HCT116 (cell line): ENCODE measurements at regions of chr11 and their contacts with region 1.

Region 1: DNA sequence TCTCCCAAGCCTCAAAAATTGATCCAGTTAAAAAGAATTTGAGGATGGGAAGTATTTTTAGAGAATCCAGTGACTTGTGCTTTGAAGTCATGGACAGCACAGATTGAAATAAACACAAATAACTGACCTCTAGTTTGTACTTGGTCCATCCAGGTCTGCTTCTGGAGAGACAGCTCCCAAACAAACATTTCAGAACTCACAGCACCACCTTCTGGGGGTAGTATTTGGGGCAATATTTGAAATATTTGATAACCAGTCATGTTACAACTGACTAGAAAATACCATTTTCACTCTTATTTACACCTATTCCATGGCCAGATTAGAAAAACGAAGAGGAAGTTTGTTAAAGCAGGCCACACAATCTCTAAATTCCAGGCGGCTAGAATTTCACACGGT is 56.2 kb downstream of the CTSC start:
- DNase-seq: no peak
- ATAC-seq: peak; percentile 42; the same call in 1 of the 2 replicates
- H3K4me3 ChIP-seq: no peak overlapping the region
- H3K27ac ChIP-seq: no peak overlapping the region
- H3K4me1 ChIP-seq: no peaks in the 10 kb centered on the region
- H3K27me3 ChIP-seq: no peaks in the 10 kb centered on the region
- CTCF ChIP-seq: peak; percentile 2 to 32 (median 32); a peak in 3 of 6 replicates
- POLR2A ChIP-seq: no peak
- RAD21 ChIP-seq: peak; percentile 62

Region 2: GRCh38 chr11:87281496-87281895 is 999.8 kb before region 1 on chr11:
- CTCF ChIA-PET with region 1: no interaction called
- POLR2A ChIA-PET with region 1: no interaction called
- RAD21 ChIA-PET with region 1: no interaction called
- intact Hi-C with region 1: no loop called
- DNase-seq: no peak
- ATAC-seq: no peak
- H3K4me3 ChIP-seq: no peak overlapping the region
- H3K27ac ChIP-seq: no peak overlapping the region
- H3K4me1 ChIP-seq: no peaks in the 10 kb centered on the region
- H3K27me3 ChIP-seq: no peaks in the 10 kb centered on the region
- CTCF ChIP-seq: peak in 1 of 3 experiments; percentile 31; a peak in 2 of 6 replicates
- POLR2A ChIP-seq: no peak
- RAD21 ChIP-seq: peak; percentile 45

Region 3: DNA sequence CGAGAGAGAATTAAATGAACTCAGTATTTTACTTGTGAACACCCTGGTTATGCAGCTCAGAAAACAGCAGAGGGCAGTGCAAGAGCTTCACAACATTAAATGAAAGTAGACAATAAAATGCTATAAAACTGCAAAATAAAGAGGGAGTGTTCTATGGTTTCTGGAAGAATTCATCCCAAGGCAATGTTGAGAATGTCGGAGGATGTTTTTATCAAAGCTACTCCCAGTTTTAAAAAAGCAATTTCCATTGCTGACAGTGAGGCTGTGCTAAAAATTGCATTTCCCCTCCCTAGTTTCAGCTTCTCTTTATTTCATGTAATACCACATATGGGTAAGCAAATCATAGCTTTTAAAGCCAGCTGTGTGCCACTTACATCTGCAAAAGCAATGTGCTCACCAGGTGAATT is 402.9 kb before region 1 on chr11:
- CTCF ChIA-PET with region 1: no interaction called
- POLR2A ChIA-PET with region 1: no interaction called
- RAD21 ChIA-PET with region 1: no interaction called
- intact Hi-C with region 1: loop called (anchors 10 kb)
- DNase-seq: peak; percentile 21
- ATAC-seq: peak; percentile 66
- H3K4me3 ChIP-seq: no peak overlapping the region
- H3K27ac ChIP-seq: no peak overlapping the region
- H3K4me1 ChIP-seq: no peaks in the 10 kb centered on the region
- H3K27me3 ChIP-seq: no peaks in the 10 kb centered on the region
- CTCF ChIP-seq: peak; percentile 42 to 64 (median 53); a peak in 5 of 6 replicates
- POLR2A ChIP-seq: no peak
- RAD21 ChIP-seq: peak; percentile 66

Region 4: DNA sequence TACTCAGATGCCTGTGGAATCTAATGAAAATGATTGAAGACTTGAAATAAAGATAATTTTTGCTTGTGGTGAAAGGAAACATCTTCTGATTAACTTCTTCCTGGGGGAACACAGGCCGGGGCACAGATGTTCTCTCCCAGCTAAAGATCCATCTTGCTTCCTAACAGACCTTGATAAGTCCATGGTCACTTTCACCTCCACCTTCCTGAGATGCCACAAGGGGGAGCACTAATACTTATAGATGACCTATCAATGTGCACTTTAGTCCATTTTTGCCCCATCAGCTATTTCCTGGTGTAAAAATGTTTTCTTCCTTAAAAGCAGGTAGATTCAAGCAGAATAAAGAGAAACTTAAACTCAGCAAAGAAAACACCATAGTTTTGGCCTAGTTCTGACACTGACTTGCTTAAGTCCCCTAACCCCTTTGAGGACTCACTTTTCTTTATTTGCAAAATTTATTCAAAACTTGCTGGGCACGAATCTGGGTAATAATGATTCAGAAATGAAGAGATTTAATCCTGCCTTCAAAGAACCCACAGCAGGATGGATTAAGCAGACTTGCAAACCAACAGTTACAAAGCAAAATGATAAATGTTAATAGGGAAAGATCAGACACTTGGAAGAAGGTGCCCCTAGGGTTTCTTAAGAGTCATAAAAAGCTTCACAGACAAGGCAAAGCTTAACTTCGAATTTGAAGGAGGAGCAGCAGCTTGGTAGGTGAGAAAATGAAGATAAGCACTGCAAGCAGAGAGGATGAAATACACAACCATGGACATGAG is 264.7 kb before region 1 on chr11:
- CTCF ChIA-PET with region 1: interaction called, 19 read pairs
- POLR2A ChIA-PET with region 1: no interaction called
- RAD21 ChIA-PET with region 1: interaction called in 1 of 2 experiments, 3 read pairs
- intact Hi-C with region 1: loop called (anchors 1 kb)
- DNase-seq: peak; percentile 78
- ATAC-seq: peak; percentile 98
- H3K4me3 ChIP-seq: no peak overlapping the region
- H3K27ac ChIP-seq: no peak overlapping the region
- H3K4me1 ChIP-seq: no peaks in the 10 kb centered on the region
- H3K27me3 ChIP-seq: no peaks in the 10 kb centered on the region
- CTCF ChIP-seq: peak; percentile 72 to 82 (median 82)
- POLR2A ChIP-seq: no peak
- RAD21 ChIP-seq: peak; percentile 92

Region 5: GRCh38 chr11:88035271-88035670 is 246.0 kb before region 1 on chr11:
- CTCF ChIA-PET with region 1: no interaction called
- POLR2A ChIA-PET with region 1: no interaction called
- RAD21 ChIA-PET with region 1: no interaction called
- intact Hi-C with region 1: no loop called
- DNase-seq: no peak
- ATAC-seq: no peak
- H3K4me3 ChIP-seq: no peak overlapping the region
- H3K27ac ChIP-seq: no peak overlapping the region
- H3K4me1 ChIP-seq: no peaks in the 10 kb centered on the region
- H3K27me3 ChIP-seq: no peaks in the 10 kb centered on the region; the same call in 1 of the 2 replicates
- CTCF ChIP-seq: no peak
- POLR2A ChIP-seq: no peak
- RAD21 ChIP-seq: no peak

Region 6: DNA sequence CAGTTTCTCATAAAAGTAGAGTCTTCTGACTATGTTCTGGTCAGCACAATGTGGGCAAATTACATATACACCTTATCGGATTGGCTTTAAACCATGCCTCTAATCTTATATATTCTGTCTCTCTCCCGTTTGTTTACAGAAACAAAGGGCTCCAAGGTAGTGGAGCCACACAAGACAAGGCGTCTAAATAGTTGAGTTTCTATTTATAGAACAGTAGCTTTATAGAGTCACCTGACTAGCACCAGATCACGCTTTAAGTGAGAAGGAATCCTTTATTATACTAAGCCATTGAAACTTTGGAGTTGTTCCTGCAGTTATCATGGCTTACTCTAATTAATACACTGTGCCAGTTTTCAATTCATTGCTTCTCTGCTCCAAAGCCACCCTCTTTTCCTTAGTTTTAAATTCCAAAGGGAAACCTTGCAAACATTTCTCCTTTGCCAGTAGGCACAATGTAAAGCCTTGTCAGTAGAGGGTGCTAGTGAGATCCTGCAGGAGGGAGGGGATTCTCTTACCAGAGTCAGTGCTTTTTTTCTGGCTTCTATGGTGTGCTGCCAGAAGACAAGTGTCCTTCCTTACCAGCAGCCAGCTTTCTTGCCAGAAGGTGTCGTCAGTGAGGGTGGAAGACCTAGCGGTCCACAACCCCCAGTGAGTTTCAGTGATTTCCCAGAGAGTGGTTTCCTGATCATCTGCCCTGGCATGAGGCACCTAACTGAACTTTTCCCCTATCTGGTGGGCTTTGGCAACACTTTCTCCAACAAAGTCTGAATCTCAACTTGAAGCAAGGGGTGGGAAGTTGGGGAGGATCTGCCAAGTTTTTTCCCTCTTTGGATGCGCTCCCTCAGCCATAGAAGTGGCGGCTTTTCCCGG is 177.7 kb before region 1 on chr11:
- CTCF ChIA-PET with region 1: interaction called, 4 read pairs
- POLR2A ChIA-PET with region 1: no interaction called
- RAD21 ChIA-PET with region 1: no interaction called
- intact Hi-C with region 1: loop called (anchors 2 kb)
- DNase-seq: peak; percentile 85
- ATAC-seq: peak; percentile 98
- H3K4me3 ChIP-seq: no peak overlapping the region
- H3K27ac ChIP-seq: no peak overlapping the region
- H3K4me1 ChIP-seq: peaks cover 0 to 10% of the 10 kb centered on the region in 2 experiments; a peak in 2 of 4 replicates
- H3K27me3 ChIP-seq: no peaks in the 10 kb centered on the region
- CTCF ChIP-seq: peak; percentile 92 to 97 (median 93)
- POLR2A ChIP-seq: no peak
- RAD21 ChIP-seq: peak; percentile 74